ENCODE measurements at regions of chr10 and their contacts with region 1.

Region 1: DNA sequence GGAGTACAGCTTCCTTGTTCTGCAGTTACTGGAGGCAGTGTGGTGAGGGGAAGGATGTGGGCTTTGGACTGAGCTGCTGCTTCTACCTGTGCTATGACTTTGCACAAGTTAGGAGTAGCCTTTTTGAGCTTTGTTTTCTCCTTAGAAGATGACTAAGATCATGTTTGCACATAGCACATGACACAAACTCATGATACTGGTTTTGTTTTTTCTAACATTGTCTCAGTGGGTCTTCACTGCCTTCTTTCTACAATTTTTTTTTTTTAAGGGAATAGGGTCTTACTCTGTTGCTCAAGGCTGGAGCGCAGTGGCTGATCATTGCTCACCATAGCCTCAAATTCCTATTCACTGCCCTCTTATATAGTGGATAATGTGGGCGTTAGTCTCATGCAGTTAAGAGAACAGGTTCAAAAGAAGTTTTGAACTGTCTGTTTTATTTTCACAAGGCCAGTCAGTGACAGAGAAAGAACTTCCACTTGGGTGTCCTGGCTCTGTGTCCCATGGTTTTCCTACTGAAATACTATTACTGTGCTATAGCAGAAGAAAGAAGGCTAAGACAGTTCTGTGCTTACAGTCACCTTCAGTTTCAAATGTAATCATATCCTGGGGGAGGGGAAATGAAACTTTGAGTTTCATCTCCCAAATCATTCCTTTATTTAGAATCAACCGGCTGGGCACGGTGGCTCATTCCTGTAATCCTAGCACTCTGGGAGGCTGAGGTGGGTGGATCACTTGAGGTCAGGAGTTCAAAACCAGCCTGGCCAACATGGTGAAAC is 72.0 kb downstream of the KAT6B start:
- DNase-seq: peak; percentile 21
- H3K4me3 Mint-ChIP-seq: peak overlapping the region; percentile 20
- H3K27ac Mint-ChIP-seq: peak overlapping the region; percentile 73
- H3K4me1 Mint-ChIP-seq: peaks cover 57% of the 10 kb centered on the region
- H3K27me3 Mint-ChIP-seq: no peaks in the 10 kb centered on the region

Region 2: GRCh38 chr10:74262856-74263255 is 635.5 kb before region 1 on chr10:
- intact Hi-C with region 1: loop called (anchors 10 kb)
- DNase-seq: no peak
- H3K4me3 Mint-ChIP-seq: no peak overlapping the region
- H3K27ac Mint-ChIP-seq: no peak overlapping the region
- H3K4me1 Mint-ChIP-seq: peaks cover 13% of the 10 kb centered on the region
- H3K27me3 Mint-ChIP-seq: no peaks in the 10 kb centered on the region

Region 3: DNA sequence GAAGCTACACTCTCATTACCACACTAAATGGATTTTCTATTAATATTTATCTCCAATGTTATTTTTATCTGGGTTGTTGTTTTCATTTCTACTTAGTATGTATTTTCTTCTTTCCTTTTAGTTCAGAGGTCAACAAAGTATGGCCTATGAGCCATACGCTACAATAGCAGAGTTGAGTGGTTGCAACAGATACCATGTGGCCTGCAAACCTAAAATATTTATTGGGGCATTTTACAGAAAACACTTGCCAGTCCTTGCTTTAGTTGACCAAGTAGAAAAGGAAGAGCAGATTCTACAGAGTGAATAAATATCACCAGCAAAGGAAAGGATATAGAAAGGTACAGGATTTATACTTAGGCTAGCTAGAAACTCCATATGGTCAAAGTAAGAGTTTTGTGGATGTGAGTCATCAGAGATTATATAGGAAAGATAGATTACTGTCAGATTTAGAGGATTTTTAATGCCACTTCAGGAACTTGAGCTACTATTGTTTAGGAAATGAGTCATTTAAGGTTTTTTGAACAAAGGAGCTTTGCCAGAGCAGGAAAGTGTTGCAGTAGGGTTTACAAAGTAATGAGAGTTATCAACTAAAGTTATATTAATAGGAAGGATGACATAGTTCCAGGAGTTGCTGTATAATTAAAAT is 395.3 kb before region 1 on chr10:
- intact Hi-C with region 1: loop called (anchors 1 kb)
- DNase-seq: no peak
- H3K4me3 Mint-ChIP-seq: no peak overlapping the region
- H3K27ac Mint-ChIP-seq: peak overlapping the region; percentile 9
- H3K4me1 Mint-ChIP-seq: peaks cover 40% of the 10 kb centered on the region
- H3K27me3 Mint-ChIP-seq: no peaks in the 10 kb centered on the region

Region 4: GRCh38 chr10:74854610-74855009 is 43.8 kb before region 1 on chr10:
- intact Hi-C with region 1: loop called (anchors 1 kb)
- DNase-seq: no peak
- H3K4me3 Mint-ChIP-seq: peak overlapping the region; percentile 51
- H3K27ac Mint-ChIP-seq: peak overlapping the region; percentile 80
- H3K4me1 Mint-ChIP-seq: peaks cover 31% of the 10 kb centered on the region
- H3K27me3 Mint-ChIP-seq: no peaks in the 10 kb centered on the region

Region 5: GRCh38 chr10:74871595-74872382 is 26.6 kb before region 1 on chr10:
- intact Hi-C with region 1: loop called (anchors 1 kb)
- DNase-seq: no peak
- H3K4me3 Mint-ChIP-seq: peak overlapping the region; percentile 76
- H3K27ac Mint-ChIP-seq: peak overlapping the region; percentile 81
- H3K4me1 Mint-ChIP-seq: peaks cover 27% of the 10 kb centered on the region
- H3K27me3 Mint-ChIP-seq: no peaks in the 10 kb centered on the region

Region 6: DNA sequence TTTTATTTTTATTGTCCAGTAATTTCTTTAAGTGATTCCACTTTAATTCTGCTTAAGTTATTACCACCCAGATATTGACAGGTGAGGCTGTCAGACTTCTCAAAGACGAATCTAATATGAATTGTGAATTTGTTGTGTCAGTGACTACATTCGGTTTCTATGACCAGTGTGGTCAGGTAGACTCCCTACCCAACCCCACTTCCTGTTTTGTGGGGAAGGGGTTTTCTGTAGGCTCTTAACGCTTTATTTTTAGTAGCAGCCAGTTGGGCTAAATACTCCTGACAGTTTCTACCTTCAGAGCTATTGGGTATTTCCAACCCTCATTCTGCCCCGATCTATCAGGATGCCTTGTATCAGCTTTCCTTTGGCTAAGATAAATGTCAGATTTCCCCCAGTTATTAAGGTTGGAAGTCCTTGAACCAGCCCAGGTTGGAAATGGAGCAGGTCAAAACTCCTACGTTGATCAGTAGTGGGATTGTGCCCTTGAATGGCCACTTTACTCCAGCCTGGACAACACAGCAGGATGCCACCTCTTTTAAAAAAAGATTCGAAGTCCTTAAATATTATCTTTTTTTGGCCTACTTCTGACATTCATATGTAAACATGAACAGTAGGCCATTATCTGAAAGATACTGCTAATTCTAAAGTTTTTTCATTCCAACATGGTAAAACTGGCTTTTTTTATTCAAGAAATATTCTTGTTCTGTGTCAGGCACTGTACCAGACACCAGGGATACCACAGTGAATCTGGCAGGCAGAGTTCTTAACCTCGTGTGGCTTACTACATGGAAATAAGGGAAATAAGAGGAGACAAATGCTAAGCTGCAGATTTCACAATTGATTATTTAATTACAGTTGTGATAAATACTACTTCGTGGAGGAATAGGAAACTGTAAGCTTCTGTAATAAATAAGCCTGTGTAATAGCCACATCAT is 79.8 kb after region 1 on chr10:
- intact Hi-C with region 1: loop called (anchors 1 kb)
- DNase-seq: peak; percentile 68
- H3K4me3 Mint-ChIP-seq: peak overlapping the region; percentile 47
- H3K27ac Mint-ChIP-seq: peak overlapping the region; percentile 75
- H3K4me1 Mint-ChIP-seq: peaks cover 55% of the 10 kb centered on the region
- H3K27me3 Mint-ChIP-seq: no peaks in the 10 kb centered on the region

Region 7: DNA sequence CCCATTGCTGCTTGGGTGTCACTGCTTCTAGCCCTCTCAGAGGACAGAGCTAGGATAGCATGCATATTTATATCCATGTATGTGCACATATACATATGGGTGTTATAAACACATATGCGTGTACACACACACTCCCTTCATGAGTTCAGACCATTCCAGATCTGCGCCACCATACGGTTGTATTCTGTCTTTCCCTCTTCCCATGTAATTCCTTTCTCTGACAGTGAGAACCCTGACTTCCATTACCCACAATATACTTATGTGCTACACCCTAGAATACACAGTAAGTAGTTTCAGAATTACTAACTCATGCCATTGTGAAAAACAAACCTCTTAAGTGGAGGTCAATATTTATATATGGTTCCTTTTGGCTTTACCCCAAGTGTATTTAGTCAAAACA is 96.5 kb after region 1 on chr10:
- intact Hi-C with region 1: loop called (anchors 5 kb)
- DNase-seq: no peak
- H3K4me3 Mint-ChIP-seq: no peak overlapping the region
- H3K27ac Mint-ChIP-seq: no peak overlapping the region
- H3K4me1 Mint-ChIP-seq: peaks cover 29% of the 10 kb centered on the region
- H3K27me3 Mint-ChIP-seq: no peaks in the 10 kb centered on the region

Region 8: DNA sequence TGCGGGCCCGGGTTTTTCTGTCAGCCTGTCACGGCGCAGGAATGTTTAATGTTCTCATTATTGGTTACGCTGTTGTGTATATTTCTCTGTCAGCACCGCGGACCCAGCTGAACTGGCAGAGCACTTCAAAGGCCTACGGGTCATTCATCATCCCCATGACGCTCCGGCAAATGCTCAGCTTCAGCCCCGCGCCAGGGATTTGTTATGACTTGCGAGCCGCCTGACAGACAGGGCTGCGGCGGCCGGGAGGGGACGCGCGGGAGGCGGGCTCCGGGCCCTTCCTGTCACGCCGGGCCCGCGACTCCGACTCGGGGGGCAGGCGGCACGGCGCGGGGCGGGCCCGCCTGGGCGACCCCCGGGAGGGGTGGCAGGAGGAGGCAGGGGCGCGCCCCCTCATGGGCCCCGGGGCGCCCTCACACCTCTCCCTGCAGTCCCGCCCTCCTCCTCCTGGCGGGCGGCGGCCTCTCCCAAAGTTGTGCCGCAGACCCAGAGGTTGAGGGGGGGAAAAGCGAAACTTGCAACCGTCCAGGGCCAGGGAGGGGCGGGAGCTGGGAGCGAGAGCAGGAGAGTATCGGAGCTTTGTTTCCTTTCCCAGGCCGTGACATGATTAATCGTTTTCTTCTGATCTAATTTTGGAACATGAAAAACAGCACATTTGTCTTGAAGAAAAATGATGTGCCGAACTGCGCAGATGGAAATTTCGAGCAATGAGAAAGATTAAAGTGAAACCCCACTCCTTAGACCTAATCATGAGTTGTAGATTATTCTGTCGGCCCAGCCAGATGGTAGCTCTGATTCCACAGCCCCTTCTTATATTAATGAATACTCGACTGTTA is 396.7 kb after region 1 on chr10:
- intact Hi-C with region 1: no loop called
- DNase-seq: peak; percentile 52
- H3K4me3 Mint-ChIP-seq: peak overlapping the region; percentile 69
- H3K27ac Mint-ChIP-seq: no peak overlapping the region
- H3K4me1 Mint-ChIP-seq: no peaks in the 10 kb centered on the region
- H3K27me3 Mint-ChIP-seq: peaks cover 22% of the 10 kb centered on the region